A673 (cell line): ENCODE measurements at regions of chr2 and their contacts with region 1.

Region 1: DNA sequence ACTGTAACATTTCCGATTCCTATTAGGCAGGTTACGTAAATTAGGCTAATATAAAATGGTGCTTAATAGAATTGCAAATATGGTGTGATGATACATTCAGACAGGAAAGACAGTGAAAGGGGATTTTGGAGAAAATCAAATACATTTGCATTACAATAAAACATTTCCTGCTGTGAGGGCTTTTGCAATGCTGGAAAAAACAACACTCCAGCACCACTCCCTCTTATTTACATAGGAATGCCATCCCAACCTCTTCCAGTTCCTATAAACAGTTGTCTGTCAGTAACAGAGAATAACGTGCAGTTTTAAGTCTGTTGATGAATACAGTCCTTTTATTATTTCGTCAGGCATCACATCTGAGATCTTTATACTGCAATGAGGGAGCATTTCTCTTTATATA is 298.8 kb upstream of the FANCL start:
- DNase-seq: peak; percentile 93
- H3K4me3 ChIP-seq: peak overlapping the region; percentile 7
- H3K27ac ChIP-seq: peak overlapping the region; percentile 78
- H3K4me1 ChIP-seq: peaks cover 87% of the 10 kb centered on the region
- H3K27me3 ChIP-seq: no peaks in the 10 kb centered on the region
- CTCF ChIP-seq: no peak

Region 2: GRCh38 chr2:58240670-58241545 is 299.1 kb before region 1 on chr2 and contains the start of gene FANCL:
- CTCF ChIA-PET with region 1: no interaction called
- POLR2A ChIA-PET with region 1: no interaction called
- intact Hi-C with region 1: loop called (anchors 10 kb)
- DNase-seq: peak; percentile 92
- H3K4me3 ChIP-seq: peak within 1 kb of the TSS; percentile 77
- H3K27ac ChIP-seq: peak within 1 kb of the TSS; percentile 92
- H3K4me1 ChIP-seq: peaks cover 12% of the 10 kb centered on the region
- H3K27me3 ChIP-seq: no peaks in the 10 kb centered on the region
- CTCF ChIP-seq: no peak
- total RNA-seq, gene FANCL: 34.7 and 35.6 TPM in 2 replicates